Mucosa of descending colon (tissue), 3 donors: ENCODE measurements at regions of chr16 and their contacts with region 1.

Region 1: GRCh38 chr16:1929578-1930337 is 11.5 kb upstream of the HS3ST6 start:
- DNase-seq: peak; percentile 91 to 96 (median 91)
- ATAC-seq: peak; percentile 98
- H3K4me3 ChIP-seq: peak overlapping the region; percentile 24
- H3K4me1 ChIP-seq: peaks cover 13% of the 10 kb centered on the region
- CTCF ChIP-seq: peak; percentile 99

Region 2: GRCh38 chr16:1863681-1864460 is 65.9 kb before region 1 on chr16:
- intact Hi-C with region 1: loop called (anchors 5 to 10 kb)
- DNase-seq: no peak
- ATAC-seq: peak; percentile 56
- H3K4me3 ChIP-seq: no peak overlapping the region
- H3K4me1 ChIP-seq: peaks cover 3% of the 10 kb centered on the region
- CTCF ChIP-seq: peak; percentile 27

Region 3: DNA sequence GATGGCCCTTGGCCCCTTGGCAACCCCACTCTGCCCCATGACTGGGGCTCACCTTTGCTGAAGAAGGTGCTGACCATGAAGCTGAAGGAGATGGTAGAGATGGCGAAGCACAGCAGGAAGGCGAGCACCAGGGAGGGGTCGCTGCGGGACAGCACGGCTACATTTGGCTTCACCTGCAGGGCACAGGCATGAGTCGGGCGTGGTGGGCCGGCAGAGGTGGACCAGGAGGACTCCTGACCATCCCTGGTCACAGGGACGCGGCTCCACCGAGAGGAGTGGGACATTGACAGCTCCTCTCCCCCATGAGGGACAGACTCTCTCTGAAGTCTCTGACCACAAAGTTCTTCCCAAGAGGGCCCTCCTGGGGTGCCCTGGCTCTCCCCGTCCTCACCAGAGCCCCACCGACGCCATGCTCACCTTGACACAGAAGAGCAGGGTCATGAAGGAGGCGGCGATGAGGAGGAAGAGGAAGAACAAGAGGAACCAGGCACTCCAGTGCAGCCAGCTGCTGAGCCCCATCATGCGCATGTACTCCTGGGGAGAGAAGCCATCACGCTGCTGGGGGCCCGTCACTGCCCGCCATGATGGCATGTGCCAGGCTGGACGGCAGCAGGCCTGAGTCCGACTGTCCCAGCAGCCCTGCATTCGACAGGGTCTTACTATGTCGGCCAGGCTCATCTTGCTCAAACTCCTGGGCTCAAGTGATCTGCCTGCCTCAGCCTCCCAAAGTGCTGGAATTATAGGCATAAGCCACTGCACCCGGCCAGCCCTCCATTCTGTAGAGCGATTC is 387.7 kb after region 1 on chr16:
- intact Hi-C with region 1: no loop called
- DNase-seq: no peak
- ATAC-seq: no peak
- H3K4me3 ChIP-seq: no peak overlapping the region
- H3K4me1 ChIP-seq: no peaks in the 10 kb centered on the region
- CTCF ChIP-seq: no peak